ENCODE measurements at regions of chr2 and their contacts with region 1.

Region 1: DNA sequence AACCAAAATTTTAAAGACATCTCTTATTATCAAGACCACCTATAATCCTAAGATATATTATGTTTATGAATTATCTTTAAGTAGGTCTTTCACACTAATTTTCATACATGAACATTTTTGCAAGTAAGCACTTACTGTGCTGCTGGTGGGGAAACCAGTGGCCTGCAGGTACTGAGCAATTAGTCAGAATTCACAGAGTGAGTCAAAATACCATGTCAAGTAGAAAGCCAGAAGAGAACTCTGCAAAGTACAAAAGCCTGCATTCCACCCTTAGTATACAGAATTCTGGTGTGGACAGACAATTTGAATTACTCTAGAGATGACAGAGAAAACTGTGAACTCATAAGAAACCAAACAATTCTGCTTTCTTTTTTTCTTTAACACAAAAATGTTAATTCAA is 183.1 kb downstream of the IKZF2 start:
- DNase-seq: no peak
- ATAC-seq: no peak
- H3K4me3 ChIP-seq: no peak overlapping the region
- H3K4me3 Mint-ChIP-seq: no peak overlapping the region
- H3K27ac ChIP-seq: no peak overlapping the region
- H3K27ac Mint-ChIP-seq: no peak overlapping the region
- H3K4me1 ChIP-seq: no peaks in the 10 kb centered on the region
- H3K4me1 Mint-ChIP-seq: peaks cover 10% of the 10 kb centered on the region
- H3K27me3 ChIP-seq: no peaks in the 10 kb centered on the region
- H3K27me3 Mint-ChIP-seq: no peaks in the 10 kb centered on the region
- CTCF ChIP-seq: no peak

Region 2: DNA sequence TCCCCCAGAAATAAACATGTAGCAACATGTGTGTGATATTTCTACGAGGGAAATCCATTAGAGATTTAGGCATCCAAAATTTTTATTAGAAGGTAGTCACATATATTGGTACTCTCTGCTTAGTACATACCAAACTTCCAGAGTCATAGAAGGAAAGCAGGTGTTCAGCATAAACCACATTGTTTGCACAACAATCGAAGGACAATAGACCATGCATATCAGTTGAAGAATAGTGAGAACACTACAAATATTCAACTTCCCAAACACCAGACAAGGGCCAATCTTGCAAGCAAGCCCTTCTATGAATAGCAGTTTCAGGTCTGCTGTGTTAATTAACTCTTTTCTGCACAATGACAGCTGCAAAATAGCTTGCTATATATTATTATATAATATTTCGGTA is 1131.9 kb before region 1 on chr2:
- CTCF ChIA-PET with region 1: no interaction called
- POLR2A ChIA-PET with region 1: no interaction called
- intact Hi-C with region 1: no loop called
- DNase-seq: no peak
- ATAC-seq: no peak
- H3K4me3 ChIP-seq: no peak overlapping the region
- H3K4me3 Mint-ChIP-seq: no peak overlapping the region
- H3K27ac ChIP-seq: no peak overlapping the region
- H3K27ac Mint-ChIP-seq: no peak overlapping the region
- H3K4me1 ChIP-seq: no peaks in the 10 kb centered on the region
- H3K4me1 Mint-ChIP-seq: no peaks in the 10 kb centered on the region
- H3K27me3 ChIP-seq: no peaks in the 10 kb centered on the region
- H3K27me3 Mint-ChIP-seq: no peaks in the 10 kb centered on the region
- CTCF ChIP-seq: no peak

Region 3: DNA sequence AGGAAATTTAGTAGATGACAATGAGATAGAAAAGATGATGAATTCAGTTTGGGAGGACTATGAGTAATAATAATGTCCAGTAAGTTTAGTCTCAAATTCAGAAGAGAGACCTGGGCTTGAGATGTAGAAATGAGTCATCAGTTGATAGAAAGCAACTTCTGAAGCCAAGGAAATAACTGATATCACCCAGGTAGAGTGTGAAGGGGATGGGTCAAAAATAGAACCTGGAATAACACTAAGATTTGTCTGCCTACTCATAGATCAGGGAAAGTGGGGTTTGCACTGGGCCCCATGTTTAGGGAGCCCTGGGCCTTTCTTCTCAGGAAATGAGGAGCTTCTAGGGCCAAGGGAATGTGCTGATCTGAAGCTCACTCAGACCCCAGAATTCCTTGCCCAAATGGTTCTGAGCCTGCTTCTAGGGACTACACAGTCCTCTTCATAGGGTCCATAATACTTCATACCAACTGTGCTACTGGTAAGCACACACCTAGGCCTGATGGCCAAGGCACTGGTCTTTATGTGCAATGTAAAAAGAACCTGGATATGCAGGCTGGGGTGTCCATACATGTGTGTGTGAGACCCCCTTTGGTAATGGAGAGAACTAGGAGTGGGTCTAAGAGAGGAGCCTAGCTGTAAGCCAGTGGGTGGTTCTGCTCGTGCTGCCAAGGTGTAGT is 42.0 kb after region 1 on chr2:
- CTCF ChIA-PET with region 1: no interaction called
- POLR2A ChIA-PET with region 1: no interaction called
- intact Hi-C with region 1: loop called (anchors 1 kb)
- DNase-seq: no peak
- ATAC-seq: no peak
- H3K4me3 ChIP-seq: no peak overlapping the region
- H3K4me3 Mint-ChIP-seq: no peak overlapping the region
- H3K27ac ChIP-seq: no peak overlapping the region
- H3K27ac Mint-ChIP-seq: no peak overlapping the region
- H3K4me1 ChIP-seq: peaks cover 0 to 2% of the 10 kb centered on the region in 2 donors
- H3K4me1 Mint-ChIP-seq: peaks cover 9% of the 10 kb centered on the region
- H3K27me3 ChIP-seq: no peaks in the 10 kb centered on the region
- H3K27me3 Mint-ChIP-seq: no peaks in the 10 kb centered on the region
- CTCF ChIP-seq: no peak

Region 4: GRCh38 chr2:213284105-213285090 is 316.1 kb after region 1 on chr2 and contains the start of gene SPAG16:
- CTCF ChIA-PET with region 1: no interaction called
- POLR2A ChIA-PET with region 1: no interaction called
- intact Hi-C with region 1: no loop called
- DNase-seq: peak; percentile 95
- ATAC-seq: peak; percentile 95
- H3K4me3 ChIP-seq: peak within 1 kb of the TSS; percentile 69 to 95 (median 77)
- H3K4me3 Mint-ChIP-seq: peak within 1 kb of the TSS; percentile 100
- H3K27ac ChIP-seq: peak within 1 kb of the TSS; percentile 41 to 77
- H3K27ac Mint-ChIP-seq: peak within 1 kb of the TSS; percentile 94
- H3K4me1 ChIP-seq: peaks cover 11 to 13% of the 10 kb centered on the region in 2 donors
- H3K4me1 Mint-ChIP-seq: peaks cover 32% of the 10 kb centered on the region
- H3K27me3 ChIP-seq: no peaks in the 10 kb centered on the region
- H3K27me3 Mint-ChIP-seq: no peaks in the 10 kb centered on the region
- CTCF ChIP-seq: no peak
- total RNA-seq, gene SPAG16: 8.6 and 9.5 TPM in 2 replicates

Measured in B cell (primary cell).